ENCODE measurements at regions of chr1 and their contacts with region 1.

Region 1: DNA sequence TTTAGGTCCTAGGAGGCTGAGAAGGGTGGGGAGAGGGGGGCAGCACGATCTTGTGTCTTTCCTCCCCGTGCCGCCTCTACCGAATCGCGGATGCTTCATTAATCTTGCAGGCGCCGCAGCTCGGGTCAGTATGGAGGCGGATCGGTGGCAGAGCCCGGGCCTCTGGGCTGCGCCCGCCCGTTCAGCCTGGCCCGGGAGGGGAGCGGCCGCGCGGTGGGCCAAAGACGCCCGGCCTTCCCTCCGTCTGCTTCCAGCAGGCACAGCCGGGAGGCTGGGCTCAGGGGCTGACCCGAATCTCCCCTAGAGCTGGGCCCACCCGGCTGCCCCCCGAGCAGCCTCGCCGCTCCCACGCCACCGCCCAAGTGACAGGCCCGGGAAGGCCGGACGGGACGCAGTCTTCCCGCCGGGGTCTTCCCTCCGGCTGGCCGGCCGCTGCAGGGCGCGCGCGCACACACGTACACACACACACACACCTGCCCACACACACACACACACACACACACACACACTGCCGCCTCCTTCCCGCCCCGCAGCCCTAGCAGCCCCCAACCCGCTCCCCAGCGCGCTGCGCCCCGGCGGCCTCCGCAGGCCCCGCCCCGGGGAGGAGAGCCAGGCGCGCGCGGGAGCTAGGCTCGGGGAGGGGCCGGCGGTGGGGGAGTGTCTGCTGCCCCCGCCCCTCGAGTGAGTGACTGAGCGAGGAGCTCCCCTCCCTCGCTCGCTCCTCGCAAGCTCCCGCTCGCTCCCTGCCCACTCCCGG is at the start of gene C1orf21:
- DNase-seq: peak; percentile 92
- ATAC-seq: peak; percentile 64 to 65
- H3K4me3 ChIP-seq: peak within 1 kb of the TSS; percentile 77 to 96 (median 92)
- H3K27ac ChIP-seq: peak within 1 kb of the TSS; percentile 97 to 100 (median 98)
- H3K4me1 ChIP-seq: peaks cover 23 to 31% of the 10 kb centered on the region in 2 donors
- H3K27me3 ChIP-seq: no peaks in the 10 kb centered on the region
- CTCF ChIP-seq: no peak
- POLR2A ChIP-seq: peak; percentile 97 to 99
- total RNA-seq, gene C1orf21: 106 to 206 (median 154) TPM

Region 2: DNA sequence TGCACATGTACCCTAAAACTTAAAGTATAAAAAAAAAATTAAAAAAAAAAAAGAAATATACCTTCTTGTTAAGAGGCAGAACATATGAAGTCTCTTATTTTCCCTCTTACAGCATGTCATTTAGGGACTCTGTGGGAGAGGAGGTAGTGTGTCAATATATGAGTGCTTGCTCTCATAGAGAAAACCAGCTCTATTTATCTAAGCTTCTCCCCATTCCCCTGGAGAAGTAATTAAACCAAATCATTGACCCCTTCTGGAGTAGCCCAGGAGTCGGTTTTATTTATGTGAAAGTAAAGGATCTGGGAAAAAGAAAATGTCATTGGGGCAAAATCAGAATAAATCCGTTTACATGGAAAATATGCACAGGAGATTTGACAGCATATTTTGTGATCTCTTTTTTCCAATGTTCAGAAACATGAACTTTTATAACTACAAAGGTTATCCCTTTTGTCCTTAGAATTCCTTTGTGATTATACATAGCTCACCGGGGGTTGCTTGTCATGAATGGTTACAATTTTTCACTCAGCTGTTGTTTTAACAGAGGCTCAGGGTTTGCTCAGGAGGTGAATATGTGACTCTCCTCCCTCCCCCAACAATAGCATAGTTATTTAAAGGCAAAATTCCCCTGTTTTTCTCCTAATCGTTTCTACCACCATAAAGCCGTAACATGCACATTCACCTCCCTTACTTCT is 114.2 kb before region 1 on chr1:
- in situ Hi-C with region 1: no loop called
- intact Hi-C with region 1: no loop called
- DNase-seq: no peak
- ATAC-seq: no peak
- H3K4me3 ChIP-seq: no peak overlapping the region
- H3K27ac ChIP-seq: no peak overlapping the region
- H3K4me1 ChIP-seq: no peaks in the 10 kb centered on the region
- H3K27me3 ChIP-seq: no peaks in the 10 kb centered on the region
- CTCF ChIP-seq: no peak
- POLR2A ChIP-seq: no peak

Region 3: DNA sequence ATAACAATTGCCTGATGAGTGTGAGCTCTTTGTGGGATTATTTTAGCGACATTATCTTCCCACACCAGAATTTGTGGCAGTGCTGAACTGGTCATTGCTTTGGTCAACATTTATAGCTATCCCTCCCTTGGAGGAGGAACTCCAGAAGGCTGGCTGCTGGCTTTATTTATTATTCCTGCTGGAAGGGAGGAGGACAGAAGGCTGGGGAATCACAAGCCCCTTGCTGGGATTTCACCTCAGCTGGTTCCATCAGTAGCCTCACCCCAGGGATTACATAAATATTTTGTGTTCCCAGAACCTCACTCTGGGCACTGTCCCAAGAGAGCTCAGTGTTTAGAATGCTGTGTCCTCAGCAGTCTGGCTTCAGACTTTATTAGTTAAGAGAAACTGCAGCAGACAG is 102.5 kb before region 1 on chr1:
- in situ Hi-C with region 1: no loop called
- intact Hi-C with region 1: no loop called
- DNase-seq: peak in 1 of 2 donors; percentile 30
- ATAC-seq: peak; percentile 53 to 57
- H3K4me3 ChIP-seq: no peak overlapping the region
- H3K27ac ChIP-seq: peak overlapping the region; percentile 9 to 72 (median 41)
- H3K4me1 ChIP-seq: peaks cover 27 to 33% of the 10 kb centered on the region in 2 donors
- H3K27me3 ChIP-seq: no peaks in the 10 kb centered on the region
- CTCF ChIP-seq: no peak
- POLR2A ChIP-seq: no peak

Region 4: DNA sequence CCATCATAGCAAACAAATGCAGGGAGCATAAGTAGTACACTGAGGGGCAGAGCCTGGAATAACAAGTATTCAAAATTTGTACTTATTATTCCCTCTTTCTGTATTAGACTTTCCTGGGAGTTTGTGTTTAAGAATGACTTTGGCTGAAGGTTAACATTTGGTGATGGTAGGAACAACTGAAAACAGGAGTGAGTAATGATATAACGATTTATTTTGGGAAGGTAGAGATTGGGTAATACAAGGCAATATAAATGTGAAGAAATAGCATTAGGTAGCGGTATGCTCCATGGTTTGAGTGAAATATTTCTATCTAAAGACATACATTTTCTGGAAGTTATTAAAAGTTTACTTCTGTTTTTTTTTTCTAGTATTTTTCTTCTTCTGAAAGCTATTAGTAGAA is 18.1 kb before region 1 on chr1:
- in situ Hi-C with region 1: no loop called
- intact Hi-C with region 1: loop called (anchors 2 kb)
- DNase-seq: no peak
- ATAC-seq: peak; percentile 18 to 72
- H3K4me3 ChIP-seq: no peak overlapping the region
- H3K27ac ChIP-seq: peak overlapping the region; percentile 49 to 83 (median 76)
- H3K4me1 ChIP-seq: peaks cover 21 to 39% of the 10 kb centered on the region in 2 donors
- H3K27me3 ChIP-seq: no peaks in the 10 kb centered on the region
- CTCF ChIP-seq: no peak
- POLR2A ChIP-seq: no peak

Region 5: GRCh38 chr1:184462155-184462554 is 75.7 kb after region 1 on chr1:
- in situ Hi-C with region 1: no loop called
- intact Hi-C with region 1: loop called (anchors 5 kb)
- DNase-seq: no peak
- ATAC-seq: peak; percentile 11 to 73
- H3K4me3 ChIP-seq: no peak overlapping the region
- H3K27ac ChIP-seq: peak overlapping the region; percentile 60 to 76 (median 69)
- H3K4me1 ChIP-seq: peaks cover 75 to 95% of the 10 kb centered on the region in 2 donors
- H3K27me3 ChIP-seq: no peaks in the 10 kb centered on the region
- CTCF ChIP-seq: no peak
- POLR2A ChIP-seq: no peak

Region 6: DNA sequence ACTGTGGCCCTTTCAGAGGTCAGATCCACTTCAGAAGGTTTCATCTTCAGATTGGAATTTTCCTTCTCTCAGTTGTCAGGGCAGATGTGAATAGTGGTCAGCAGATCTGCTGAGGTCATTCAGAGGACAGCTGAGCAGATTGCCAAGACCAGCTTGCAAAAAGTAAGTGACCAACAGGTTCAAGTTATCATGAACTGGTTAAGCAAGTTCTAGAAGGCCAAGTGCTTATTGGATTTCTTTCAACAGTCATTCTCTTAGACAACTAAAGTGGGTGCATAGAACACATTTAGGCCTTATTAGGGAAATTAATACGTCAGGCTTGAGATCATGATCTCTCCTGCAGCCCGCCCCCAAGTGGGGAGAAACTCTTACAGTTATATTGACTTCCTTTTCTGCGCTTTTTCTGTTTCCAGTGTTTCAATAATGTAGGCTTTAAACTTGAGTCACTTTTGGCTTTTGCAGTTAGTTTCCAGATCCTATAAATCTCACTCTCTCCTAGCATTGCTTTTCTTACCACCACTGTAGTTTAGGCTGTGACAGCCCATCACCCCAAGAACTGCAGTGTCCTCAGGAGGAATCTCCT is 96.7 kb after region 1 on chr1:
- in situ Hi-C with region 1: loop called in 2 of 4 experiments (anchors 10 to 25 kb)
- intact Hi-C with region 1: loop called (anchors 5 kb)
- DNase-seq: peak; percentile 88 to 94
- ATAC-seq: peak; percentile 86 to 88
- H3K4me3 ChIP-seq: no peak overlapping the region
- H3K27ac ChIP-seq: peak overlapping the region; percentile 90 to 96 (median 91)
- H3K4me1 ChIP-seq: peaks cover 84 to 88% of the 10 kb centered on the region in 2 donors
- H3K27me3 ChIP-seq: no peaks in the 10 kb centered on the region
- CTCF ChIP-seq: peak in 2 of 5 experiments; percentile 20 to 21
- POLR2A ChIP-seq: peak in 1 of 2 donors; percentile 15

Region 7: DNA sequence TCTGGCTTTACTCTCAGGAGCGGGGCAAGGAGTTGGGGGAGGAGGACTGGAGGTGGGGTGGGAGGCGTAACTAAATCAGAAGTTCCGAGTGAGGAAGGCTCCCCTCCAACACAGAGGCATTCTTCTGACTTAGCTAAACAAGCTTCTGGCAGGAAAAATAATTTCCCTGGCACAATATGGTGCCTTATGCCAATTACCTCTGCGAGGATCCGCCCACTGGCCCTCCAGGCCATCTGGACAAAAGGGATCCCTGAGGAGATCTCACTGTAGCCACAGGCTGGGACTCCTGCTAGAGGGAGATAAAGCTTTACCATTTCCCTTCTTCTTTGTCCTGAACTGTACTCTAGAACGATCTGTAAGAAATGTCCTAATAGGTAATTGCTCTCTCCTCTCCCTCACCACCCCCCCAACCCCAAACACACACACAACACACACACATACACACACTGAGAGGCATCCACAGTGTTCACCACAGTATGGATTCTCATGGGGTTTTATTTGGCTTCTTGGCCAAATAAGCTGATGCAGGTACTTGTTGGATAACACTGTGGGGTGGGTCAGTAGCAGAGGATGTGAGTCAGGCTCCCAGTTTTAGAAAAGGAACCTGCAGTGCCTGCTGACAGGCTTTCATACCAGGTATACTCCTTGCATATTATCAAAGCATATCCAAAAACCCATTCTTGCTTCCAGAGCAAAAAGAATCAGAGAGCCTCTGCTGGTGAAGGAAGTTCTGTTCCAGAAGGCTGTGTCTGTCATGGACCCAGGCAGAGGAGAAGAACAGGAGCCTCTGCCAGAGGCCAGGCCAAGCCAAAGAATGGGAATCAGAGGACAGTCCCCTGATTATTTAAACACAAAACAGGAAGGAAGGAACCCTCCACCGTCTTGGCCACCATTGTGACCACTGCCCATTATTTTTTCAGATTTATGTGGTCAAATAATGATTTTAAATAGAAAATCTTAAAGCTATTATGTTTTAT is 169.5 kb after region 1 on chr1:
- in situ Hi-C with region 1: loop called (anchors 5 to 25 kb)
- intact Hi-C with region 1: loop called (anchors 2 kb)
- DNase-seq: peak; percentile 52 to 67
- ATAC-seq: peak; percentile 81 to 82
- H3K4me3 ChIP-seq: no peak overlapping the region
- H3K27ac ChIP-seq: peak overlapping the region; percentile 91 to 97 (median 95)
- H3K4me1 ChIP-seq: peaks cover 40 to 69% of the 10 kb centered on the region in 2 donors
- H3K27me3 ChIP-seq: no peaks in the 10 kb centered on the region
- CTCF ChIP-seq: no peak
- POLR2A ChIP-seq: peak in 1 of 2 donors; percentile 12

Region 8: GRCh38 chr1:184563308-184563707 is 176.8 kb after region 1 on chr1:
- in situ Hi-C with region 1: loop called (anchors 5 to 25 kb)
- intact Hi-C with region 1: loop called (anchors 2 kb)
- DNase-seq: no peak
- ATAC-seq: no peak
- H3K4me3 ChIP-seq: no peak overlapping the region
- H3K27ac ChIP-seq: peak overlapping the region; percentile 91 to 97 (median 95)
- H3K4me1 ChIP-seq: peaks cover 33 to 42% of the 10 kb centered on the region in 2 donors
- H3K27me3 ChIP-seq: no peaks in the 10 kb centered on the region
- CTCF ChIP-seq: peak; percentile 31 to 62 (median 45)
- POLR2A ChIP-seq: no peak

Region 9: GRCh38 chr1:184622136-184622823 is 235.8 kb after region 1 on chr1:
- in situ Hi-C with region 1: no loop called
- intact Hi-C with region 1: loop called (anchors 1 kb)
- DNase-seq: peak; percentile 90 to 92
- ATAC-seq: peak; percentile 79 to 83
- H3K4me3 ChIP-seq: no peak overlapping the region
- H3K27ac ChIP-seq: peak overlapping the region; percentile 87 to 97 (median 88)
- H3K4me1 ChIP-seq: peaks cover 74 to 84% of the 10 kb centered on the region in 2 donors
- H3K27me3 ChIP-seq: no peaks in the 10 kb centered on the region
- CTCF ChIP-seq: no peak
- POLR2A ChIP-seq: peak; percentile 22 to 61

Region 10: DNA sequence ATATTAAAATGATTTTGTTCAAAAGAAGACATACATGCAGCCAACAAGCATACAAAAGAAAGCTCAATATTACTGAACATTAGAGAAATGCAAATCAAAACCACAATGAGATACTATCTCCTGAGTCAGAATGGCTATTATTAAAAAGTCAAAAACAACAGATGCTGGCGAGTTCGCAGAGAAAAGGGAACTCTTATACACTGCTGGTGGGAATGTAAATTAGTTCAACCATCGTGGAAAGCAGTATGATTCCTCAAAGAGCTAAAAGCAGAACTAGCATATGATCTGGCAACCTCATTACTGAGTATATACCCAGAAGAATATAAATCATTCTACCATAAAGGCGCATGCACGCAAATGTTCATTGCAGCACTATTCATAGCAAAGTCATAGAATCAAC is 1221.7 kb after region 1 on chr1:
- in situ Hi-C with region 1: no loop called
- intact Hi-C with region 1: no loop called
- DNase-seq: no peak
- ATAC-seq: no peak
- H3K4me3 ChIP-seq: no peak overlapping the region
- H3K27ac ChIP-seq: no peak overlapping the region
- H3K4me1 ChIP-seq: no peaks in the 10 kb centered on the region
- H3K27me3 ChIP-seq: no peaks in the 10 kb centered on the region
- CTCF ChIP-seq: no peak
- POLR2A ChIP-seq: no peak

Measured in gastrocnemius medialis (tissue), 4 donors.